ENCODE measurements at regions of chr1 and their contacts with region 1.

Region 1: DNA sequence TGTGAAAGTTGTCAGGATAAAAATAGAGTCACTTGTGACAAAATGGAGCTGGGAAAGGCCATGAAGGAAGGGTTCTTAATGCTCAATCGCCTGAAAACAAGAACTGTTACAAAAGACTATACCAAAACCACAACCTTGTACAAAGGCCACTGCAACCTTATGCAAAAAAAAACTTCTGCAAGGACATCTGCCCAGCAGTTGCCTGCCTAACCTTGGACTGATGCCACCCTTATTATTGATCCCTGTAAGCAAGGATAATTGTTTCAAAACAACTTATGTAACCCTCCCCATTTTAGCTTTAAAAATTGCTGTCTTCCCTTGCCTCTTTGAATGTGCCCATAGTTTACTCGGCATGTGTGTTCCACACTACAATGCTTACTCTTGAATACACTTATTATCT is 5.7 kb downstream of the ALG14 start:
- DNase-seq: no peak
- H3K4me3 ChIP-seq: no peak overlapping the region
- H3K27ac ChIP-seq: no peak overlapping the region
- H3K4me1 ChIP-seq: no peaks in the 10 kb centered on the region
- H3K27me3 ChIP-seq: no peaks in the 10 kb centered on the region
- CTCF ChIP-seq: no peak
- POLR2A ChIP-seq: no peak

Region 2: DNA sequence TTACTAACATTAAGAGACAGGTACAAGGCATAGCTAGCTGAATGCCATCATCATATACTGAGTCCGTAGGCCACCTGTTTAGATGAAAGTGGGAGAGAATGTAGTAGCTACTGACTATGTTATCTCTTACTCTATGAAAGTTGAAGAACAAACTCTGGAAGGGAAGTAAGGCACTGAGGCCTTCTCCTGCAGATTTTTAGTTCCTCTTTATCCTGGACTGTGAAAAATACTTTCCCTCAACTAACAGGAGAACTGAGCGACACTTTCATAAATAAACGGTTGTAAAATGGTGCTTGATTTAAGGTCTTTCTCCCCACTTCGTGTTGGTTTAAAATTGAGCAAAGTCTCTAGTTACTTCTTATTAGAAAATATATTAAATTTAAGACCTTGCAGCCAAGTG is 1517.3 kb before region 1 on chr1:
- intact Hi-C with region 1: loop called (anchors 10 kb)
- DNase-seq: no peak
- H3K4me3 ChIP-seq: no peak overlapping the region
- H3K27ac ChIP-seq: no peak overlapping the region
- H3K4me1 ChIP-seq: peaks cover 0 to 13% of the 10 kb centered on the region in 2 donors
- H3K27me3 ChIP-seq: no peaks in the 10 kb centered on the region
- CTCF ChIP-seq: no peak
- POLR2A ChIP-seq: no peak

Region 3: DNA sequence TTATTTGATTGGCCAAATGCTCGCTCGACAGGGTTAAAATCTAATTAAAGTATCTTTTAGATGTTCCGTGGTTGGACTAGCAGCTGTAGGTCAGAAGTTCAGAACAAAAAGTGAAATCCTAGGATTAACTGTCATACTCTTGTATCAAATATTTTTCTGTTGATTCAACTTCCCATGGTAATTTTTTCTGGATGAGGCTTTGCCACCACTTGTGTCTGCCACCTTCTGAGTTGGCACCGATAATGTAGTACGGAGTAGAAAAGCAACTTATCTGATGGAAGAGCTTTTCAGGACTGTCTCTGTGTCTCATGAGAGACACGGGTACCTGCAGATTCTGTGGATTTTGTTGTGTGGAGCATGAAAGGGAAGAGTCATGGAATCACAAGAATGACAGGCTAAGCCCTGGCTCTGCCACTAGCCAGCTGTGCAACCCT is 95.6 kb before region 1 on chr1:
- intact Hi-C with region 1: no loop called
- DNase-seq: no peak
- H3K4me3 ChIP-seq: no peak overlapping the region
- H3K27ac ChIP-seq: peak overlapping the region; percentile 72 to 73
- H3K4me1 ChIP-seq: peaks cover 0 to 5% of the 10 kb centered on the region in 2 donors
- H3K27me3 ChIP-seq: no peaks in the 10 kb centered on the region
- CTCF ChIP-seq: no peak
- POLR2A ChIP-seq: no peak

Region 4: DNA sequence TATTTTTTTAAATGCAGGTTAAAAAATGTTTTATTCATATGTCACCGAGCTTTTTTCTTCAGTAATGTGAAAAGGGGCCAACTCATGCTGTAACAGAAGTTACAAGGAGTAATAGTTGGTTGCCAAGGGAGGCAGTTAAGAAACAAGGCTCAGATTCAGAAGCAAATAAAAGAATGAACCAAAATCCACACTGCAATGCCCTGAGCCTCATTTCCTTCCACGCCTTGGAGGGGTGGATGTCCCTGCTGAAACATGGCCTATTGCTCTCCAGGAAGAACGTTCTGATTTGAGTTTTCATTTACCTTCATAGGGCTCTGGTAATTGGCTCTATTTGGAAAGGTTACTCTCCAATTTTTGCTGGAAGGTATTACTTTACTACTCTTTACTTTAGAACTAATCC is 18.7 kb before region 1 on chr1:
- intact Hi-C with region 1: no loop called
- DNase-seq: no peak
- H3K4me3 ChIP-seq: no peak overlapping the region
- H3K27ac ChIP-seq: no peak overlapping the region
- H3K4me1 ChIP-seq: no peaks in the 10 kb centered on the region
- H3K27me3 ChIP-seq: no peaks in the 10 kb centered on the region
- CTCF ChIP-seq: no peak
- POLR2A ChIP-seq: no peak

Region 5: DNA sequence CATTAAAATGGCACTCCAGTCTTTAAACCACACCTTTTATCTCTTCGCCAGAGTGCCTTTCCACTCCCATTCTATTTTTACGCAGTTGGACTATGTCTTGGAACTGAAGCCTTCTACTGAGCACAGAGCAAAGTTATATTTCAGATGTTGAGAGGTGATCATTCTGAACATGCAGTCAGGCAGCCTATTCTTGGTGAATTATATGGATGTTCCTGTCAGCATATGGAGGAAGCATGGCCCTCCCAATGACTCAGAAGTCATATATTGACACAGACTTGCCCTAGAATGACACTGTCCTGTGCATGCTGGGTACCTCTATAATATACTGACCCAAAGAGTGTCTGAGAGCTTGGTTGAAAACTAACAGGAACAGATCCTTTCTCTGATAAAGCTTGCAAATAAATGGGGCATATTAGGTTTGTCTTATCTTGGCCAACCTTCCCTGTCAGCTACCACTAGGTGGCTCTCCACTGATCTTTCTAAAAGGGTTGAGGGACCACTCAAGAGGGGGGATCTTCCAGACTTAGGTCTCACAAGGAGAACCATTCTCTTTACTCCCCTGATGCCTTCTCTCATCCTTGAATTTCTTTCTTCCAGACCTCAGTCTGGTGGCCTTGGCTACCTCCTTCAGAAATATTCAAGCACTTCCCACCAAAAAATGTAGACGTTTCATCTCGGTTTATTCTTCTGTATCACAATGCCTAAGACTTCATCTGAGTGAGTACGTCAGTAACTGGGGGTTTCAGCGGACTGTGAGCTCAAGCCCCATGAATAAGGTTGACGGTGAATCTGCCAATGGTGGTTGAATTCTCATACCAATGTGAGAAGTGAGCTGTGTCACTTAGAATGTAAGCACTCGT is 17.5 kb after region 1 on chr1:
- intact Hi-C with region 1: no loop called
- DNase-seq: no peak
- H3K4me3 ChIP-seq: no peak overlapping the region
- H3K27ac ChIP-seq: no peak overlapping the region
- H3K4me1 ChIP-seq: no peaks in the 10 kb centered on the region
- H3K27me3 ChIP-seq: no peaks in the 10 kb centered on the region
- CTCF ChIP-seq: peak in 2 of 3 donors; percentile 27 to 29
- POLR2A ChIP-seq: no peak